Caco-2 (cell line): ENCODE measurements at regions of chr22 and their contacts with region 1.

Region 1: DNA sequence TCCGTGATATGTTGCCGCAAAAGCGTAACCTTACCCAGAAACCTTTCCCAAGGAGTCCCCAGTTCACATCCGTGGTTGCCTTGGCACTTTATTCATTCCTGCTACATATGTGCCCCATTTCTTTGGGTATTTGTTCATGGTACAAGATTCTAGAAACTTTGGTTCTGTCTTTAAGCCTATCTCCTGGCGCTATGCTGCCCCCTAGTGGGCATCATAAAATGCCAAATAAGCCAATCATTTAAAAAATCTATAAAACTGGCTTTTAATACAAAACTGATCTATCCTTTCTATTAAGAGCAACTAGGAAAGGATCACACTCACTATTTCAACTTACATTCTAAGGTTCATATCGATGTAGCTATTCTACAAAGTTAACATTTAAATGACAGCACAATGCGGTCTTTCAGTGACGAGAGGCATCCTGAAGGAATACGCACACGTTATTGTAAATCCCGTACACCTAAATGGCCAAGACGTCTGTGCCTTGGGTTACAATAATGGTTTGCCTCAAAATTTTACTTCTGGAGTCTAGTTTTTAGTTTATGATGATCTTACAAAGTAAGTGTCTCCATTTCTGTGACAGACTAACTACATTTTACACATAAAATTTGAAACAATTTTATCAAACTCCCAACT is 16.2 kb downstream of the PIWIL3 start:
- DNase-seq: peak in 1 of 2 experiments; percentile 68
- H3K4me3 ChIP-seq: no peak overlapping the region
- H3K4me3 Mint-ChIP-seq: no peak overlapping the region
- H3K27ac Mint-ChIP-seq: no peak overlapping the region
- H3K4me1 ChIP-seq: no peaks in the 10 kb centered on the region
- H3K4me1 Mint-ChIP-seq: no peaks in the 10 kb centered on the region
- H3K27me3 ChIP-seq: no peaks in the 10 kb centered on the region
- H3K27me3 Mint-ChIP-seq: no peaks in the 10 kb centered on the region
- CTCF ChIP-seq: peak; percentile 73 to 87

Region 2: GRCh38 chr22:24706054-24706453 is 52.2 kb before region 1 on chr22:
- CTCF ChIA-PET with region 1: interaction called, 12 read pairs
- POLR2A ChIA-PET with region 1: no interaction called
- intact Hi-C with region 1: loop called (anchors 1 kb)
- DNase-seq: peak in 1 of 2 experiments; percentile 53
- H3K4me3 ChIP-seq: no peak overlapping the region
- H3K4me3 Mint-ChIP-seq: no peak overlapping the region
- H3K27ac Mint-ChIP-seq: no peak overlapping the region
- H3K4me1 ChIP-seq: peaks cover 8% of the 10 kb centered on the region; the same call in 1 of the 2 replicates
- H3K4me1 Mint-ChIP-seq: no peaks in the 10 kb centered on the region
- H3K27me3 ChIP-seq: no peaks in the 10 kb centered on the region
- H3K27me3 Mint-ChIP-seq: no peaks in the 10 kb centered on the region
- CTCF ChIP-seq: peak; percentile 45 to 58